ENCODE measurements at regions of chr16 and their contacts with region 1.

Region 1: GRCh38 chr16:5615868-5616642 is 518.5 kb upstream of the EEF2KMT start:
- DNase-seq: peak; percentile 67
- ATAC-seq: peak; percentile 84

Region 2: DNA sequence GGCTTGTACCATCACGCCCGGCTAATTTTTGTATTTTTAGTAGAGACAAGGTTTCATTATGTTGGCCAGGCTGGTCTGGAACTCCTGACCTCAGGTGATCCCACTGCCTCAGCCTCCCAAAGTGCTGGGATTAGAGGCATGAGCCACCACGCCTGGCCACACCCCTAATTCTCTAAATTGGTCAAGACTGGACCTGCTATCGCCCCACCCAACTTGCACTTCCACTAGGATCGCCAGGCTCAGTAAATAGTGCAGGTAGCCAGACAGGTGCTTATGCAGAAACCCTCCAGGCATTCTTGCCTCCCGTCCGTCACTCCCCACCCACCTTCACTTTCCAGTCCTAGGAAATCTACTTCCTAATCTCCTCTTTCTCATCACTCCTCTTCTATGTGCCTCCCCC is 37.1 kb before region 1 on chr16:
- intact Hi-C with region 1: loop called (anchors 1 kb)
- DNase-seq: no peak
- ATAC-seq: no peak